ENCODE measurements at regions of chr11 and their contacts with region 1.

Region 1: GRCh38 chr11:9506489-9507276 is 45.9 kb downstream of the ZNF143 start:
- DNase-seq: peak; percentile 72 to 88 (median 84)
- H3K4me3 ChIP-seq: no peak overlapping the region
- H3K27ac ChIP-seq: no peak overlapping the region
- H3K4me1 ChIP-seq: no peaks in the 10 kb centered on the region
- H3K27me3 ChIP-seq: no peaks in the 10 kb centered on the region

Region 2: GRCh38 chr11:9169595-9170295 is 336.9 kb before region 1 on chr11:
- CTCF ChIA-PET with region 1: interaction called, 32 read pairs
- POLR2A ChIA-PET with region 1: no interaction called
- DNase-seq: no peak
- H3K4me3 ChIP-seq: no peak overlapping the region
- H3K27ac ChIP-seq: no peak overlapping the region
- H3K4me1 ChIP-seq: no peaks in the 10 kb centered on the region
- H3K27me3 ChIP-seq: no peaks in the 10 kb centered on the region

Region 3: GRCh38 chr11:9448576-9449352 is 57.9 kb before region 1 on chr11:
- CTCF ChIA-PET with region 1: no interaction called
- POLR2A ChIA-PET with region 1: no interaction called
- DNase-seq: no peak
- H3K4me3 ChIP-seq: no peak overlapping the region
- H3K27ac ChIP-seq: no peak overlapping the region
- H3K4me1 ChIP-seq: no peaks in the 10 kb centered on the region
- H3K27me3 ChIP-seq: no peaks in the 10 kb centered on the region

Region 4: GRCh38 chr11:9490376-9490775 is 16.3 kb before region 1 on chr11:
- CTCF ChIA-PET with region 1: interaction called, 18 read pairs
- POLR2A ChIA-PET with region 1: no interaction called
- DNase-seq: no peak
- H3K4me3 ChIP-seq: no peak overlapping the region
- H3K27ac ChIP-seq: no peak overlapping the region
- H3K4me1 ChIP-seq: no peaks in the 10 kb centered on the region
- H3K27me3 ChIP-seq: no peaks in the 10 kb centered on the region

Region 5: DNA sequence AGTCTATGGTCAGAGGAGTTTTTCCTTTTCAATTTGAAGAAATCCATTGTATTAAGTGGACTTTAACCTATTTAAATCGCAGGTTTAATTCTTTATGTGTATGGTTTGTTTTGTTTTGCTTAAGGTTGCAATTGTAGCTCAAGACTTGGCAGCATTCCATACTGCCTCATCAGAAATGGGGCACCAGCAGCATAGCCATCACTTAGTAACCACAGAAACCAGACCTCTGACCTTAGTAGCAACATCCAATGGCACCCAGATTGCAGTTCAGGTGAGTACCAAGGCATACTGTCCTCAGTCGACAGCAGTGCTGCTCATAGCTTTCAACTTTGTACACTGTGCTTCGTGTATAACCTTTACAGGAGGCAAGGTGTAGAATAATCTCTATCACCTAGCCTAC is 18.4 kb after region 1 on chr11:
- CTCF ChIA-PET with region 1: interaction called, 10 read pairs
- POLR2A ChIA-PET with region 1: no interaction called
- DNase-seq: no peak
- H3K4me3 ChIP-seq: no peak overlapping the region
- H3K27ac ChIP-seq: no peak overlapping the region
- H3K4me1 ChIP-seq: peaks cover 0 to 7% (median 0%) of the 10 kb centered on the region in 4 experiments
- H3K27me3 ChIP-seq: no peaks in the 10 kb centered on the region